Endothelial cell of umbilical vein (primary cell): ENCODE measurements at regions of chr15 and their contacts with region 1.

Region 1: DNA sequence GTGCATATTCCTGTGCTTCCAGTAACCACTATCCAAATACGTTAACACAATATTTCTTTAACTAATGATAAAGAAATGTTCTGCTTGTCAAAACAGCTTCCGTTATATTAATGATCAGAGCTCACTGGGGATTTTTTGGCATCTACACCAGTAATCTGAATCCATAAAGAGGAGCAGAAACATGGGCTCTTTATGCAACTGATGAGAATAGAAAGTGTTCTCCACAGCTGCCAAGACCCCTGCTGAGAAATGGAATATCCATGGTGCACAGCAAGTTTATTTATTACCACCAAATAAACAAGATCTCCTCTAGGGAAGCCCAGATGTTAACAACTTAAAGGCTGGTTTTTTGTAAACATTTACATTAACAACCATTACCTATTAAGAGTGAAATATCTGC is 54.5 kb downstream of the ALDH1A2 start:
- DNase-seq: no peak
- H3K4me3 ChIP-seq: no peak overlapping the region
- H3K27ac ChIP-seq: no peak overlapping the region
- H3K4me1 ChIP-seq: no peaks in the 10 kb centered on the region
- H3K27me3 ChIP-seq: no peaks in the 10 kb centered on the region
- CTCF ChIP-seq: no peak
- POLR2A ChIP-seq: no peak

Region 2: DNA sequence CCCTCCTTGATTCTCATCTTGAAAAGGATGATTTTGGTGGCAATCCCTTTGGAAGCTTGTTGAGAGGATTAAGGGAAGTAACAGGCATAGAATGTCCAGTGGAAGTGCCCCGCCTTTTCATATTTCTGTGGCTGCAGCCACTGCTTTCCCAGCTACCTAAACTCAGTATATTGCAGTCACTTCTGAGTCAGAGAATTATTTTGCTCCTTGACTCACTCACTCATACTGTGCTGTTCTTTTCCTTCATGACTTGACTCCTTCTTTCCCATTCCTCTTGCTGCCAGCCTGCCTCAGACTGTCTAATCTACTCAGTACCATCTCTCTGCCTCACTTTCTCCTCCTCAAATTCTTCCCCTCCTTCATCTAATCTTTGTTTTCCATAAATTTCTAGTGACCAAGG is 331.0 kb before region 1 on chr15:
- CTCF ChIA-PET with region 1: no interaction called
- POLR2A ChIA-PET with region 1: no interaction called
- dilution Hi-C with region 1: no loop called
- intact Hi-C with region 1: no loop called
- DNase-seq: peak; percentile 35
- H3K4me3 ChIP-seq: no peak overlapping the region
- H3K27ac ChIP-seq: no peak overlapping the region
- H3K4me1 ChIP-seq: no peaks in the 10 kb centered on the region
- H3K27me3 ChIP-seq: no peaks in the 10 kb centered on the region
- CTCF ChIP-seq: no peak
- POLR2A ChIP-seq: no peak

Region 3: DNA sequence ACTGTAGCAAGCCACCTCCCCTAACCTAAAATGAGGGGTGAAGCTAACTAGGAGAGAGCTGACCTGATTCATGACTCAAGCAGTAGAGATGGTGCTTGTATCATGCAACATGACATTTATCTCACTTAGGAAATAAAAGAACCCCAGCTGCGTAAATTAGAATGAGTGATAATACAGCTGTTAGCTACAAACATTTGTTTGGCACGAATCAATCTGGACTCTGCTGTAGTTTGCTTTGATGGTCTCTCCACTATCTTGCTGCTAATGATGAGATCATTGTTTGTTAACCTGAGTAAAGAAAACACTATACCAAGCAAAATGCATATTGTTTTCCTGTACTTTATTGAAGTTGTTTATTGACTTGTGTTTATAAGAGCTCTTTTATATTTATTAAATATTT is 38.1 kb before region 1 on chr15:
- CTCF ChIA-PET with region 1: no interaction called
- POLR2A ChIA-PET with region 1: no interaction called
- dilution Hi-C with region 1: no loop called
- intact Hi-C with region 1: no loop called
- DNase-seq: no peak
- H3K4me3 ChIP-seq: no peak overlapping the region
- H3K27ac ChIP-seq: no peak overlapping the region
- H3K4me1 ChIP-seq: no peaks in the 10 kb centered on the region
- H3K27me3 ChIP-seq: no peaks in the 10 kb centered on the region
- CTCF ChIP-seq: no peak
- POLR2A ChIP-seq: no peak

Region 4: GRCh38 chr15:57994221-57995049 is 16.5 kb before region 1 on chr15:
- CTCF ChIA-PET with region 1: interaction called, 10 read pairs
- POLR2A ChIA-PET with region 1: no interaction called
- dilution Hi-C with region 1: no loop called
- intact Hi-C with region 1: no loop called
- DNase-seq: peak; percentile 81
- H3K4me3 ChIP-seq: no peak overlapping the region
- H3K27ac ChIP-seq: no peak overlapping the region
- H3K4me1 ChIP-seq: peaks cover 9% of the 10 kb centered on the region
- H3K27me3 ChIP-seq: no peaks in the 10 kb centered on the region
- CTCF ChIP-seq: no peak
- POLR2A ChIP-seq: no peak